CD4-positive, alpha-beta T cell (primary cell): ENCODE measurements at regions of chr5 and their contacts with region 1.

Region 1: GRCh38 chr5:178895651-178896571 is at the start of gene ZFP2:
- DNase-seq: peak in 11 of 14 experiments; percentile 2 to 60 (median 21)
- ATAC-seq: peak; percentile 73
- H3K4me3 ChIP-seq: peak within 1 kb of the TSS; percentile 61
- H3K4me3 Mint-ChIP-seq: peak within 1 kb of the TSS; percentile 90
- H3K27ac ChIP-seq: no peak within 1 kb of the TSS
- H3K27ac Mint-ChIP-seq: no peak within 1 kb of the TSS
- H3K4me1 ChIP-seq: peaks cover 9% of the 10 kb centered on the region
- H3K4me1 Mint-ChIP-seq: peaks cover 7% of the 10 kb centered on the region
- H3K27me3 ChIP-seq: no peaks in the 10 kb centered on the region
- H3K27me3 Mint-ChIP-seq: no peaks in the 10 kb centered on the region
- CTCF ChIP-seq: no peak
- total RNA-seq, gene ZFP2: 0.36 to 0.49 TPM

Region 2: GRCh38 chr5:177300236-177300880 is 1595.6 kb before region 1 on chr5:
- CTCF ChIA-PET with region 1: no interaction called
- POLR2A ChIA-PET with region 1: no interaction called
- intact Hi-C with region 1: no loop called
- DNase-seq: peak in 8 of 14 experiments; percentile 35 to 89 (median 50)
- ATAC-seq: peak; percentile 45
- H3K4me3 ChIP-seq: no peak overlapping the region
- H3K4me3 Mint-ChIP-seq: peak overlapping the region; percentile 79
- H3K27ac ChIP-seq: peak overlapping the region; percentile 49 to 55
- H3K27ac Mint-ChIP-seq: peak overlapping the region; percentile 88
- H3K4me1 ChIP-seq: peaks cover 72% of the 10 kb centered on the region
- H3K4me1 Mint-ChIP-seq: peaks cover 81% of the 10 kb centered on the region
- H3K27me3 ChIP-seq: no peaks in the 10 kb centered on the region
- H3K27me3 Mint-ChIP-seq: no peaks in the 10 kb centered on the region
- CTCF ChIP-seq: no peak

Region 3: DNA sequence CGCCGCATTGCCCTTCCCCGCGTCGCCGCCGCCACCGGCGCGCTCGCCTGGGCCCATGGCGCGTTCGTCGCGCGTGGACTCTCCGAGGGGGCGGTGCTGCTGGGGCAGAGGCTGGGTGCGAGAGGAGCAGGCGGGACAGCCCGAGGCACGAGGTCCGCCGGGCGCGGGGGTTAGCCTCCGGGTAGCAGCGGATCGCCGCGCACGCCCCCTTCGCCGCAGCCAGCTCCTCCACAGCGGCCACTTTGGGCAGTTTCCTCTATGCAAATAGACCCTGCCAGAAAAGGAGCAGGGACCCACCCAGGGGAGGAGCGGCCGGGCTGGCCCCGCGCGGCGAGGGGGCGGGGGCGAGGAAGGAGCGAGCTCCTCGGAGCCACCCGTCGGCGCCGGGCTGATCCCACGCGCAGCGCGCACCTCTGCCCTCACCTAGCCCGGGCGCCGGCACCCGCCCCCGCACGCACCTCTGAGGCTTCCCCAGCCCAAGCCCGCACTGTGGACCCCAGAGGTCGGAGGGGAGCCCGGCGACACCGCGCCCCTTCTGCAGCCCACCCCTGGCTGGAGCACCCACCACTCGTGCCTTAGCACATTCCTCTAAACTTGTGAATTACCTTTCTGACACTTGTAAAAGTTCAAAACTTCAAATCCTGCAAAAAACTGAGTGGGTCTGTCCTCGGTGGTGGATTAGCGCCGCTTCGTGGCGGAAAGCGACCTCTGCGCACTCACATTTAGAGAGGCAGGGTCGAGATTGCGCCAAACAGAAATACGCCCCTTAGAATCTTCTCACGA is 305.6 kb before region 1 on chr5 and contains the start of gene COL23A1:
- CTCF ChIA-PET with region 1: no interaction called
- POLR2A ChIA-PET with region 1: no interaction called
- intact Hi-C with region 1: no loop called
- DNase-seq: peak in 12 of 14 experiments; percentile 6 to 63 (median 34)
- ATAC-seq: peak; percentile 69
- H3K4me3 ChIP-seq: peak within 1 kb of the TSS; percentile 25
- H3K4me3 Mint-ChIP-seq: peak within 1 kb of the TSS; percentile 83
- H3K27ac ChIP-seq: no peak within 1 kb of the TSS
- H3K27ac Mint-ChIP-seq: no peak within 1 kb of the TSS
- H3K4me1 ChIP-seq: peaks cover 21% of the 10 kb centered on the region
- H3K4me1 Mint-ChIP-seq: peaks cover 10% of the 10 kb centered on the region
- H3K27me3 ChIP-seq: peaks cover 34 to 43% of the 10 kb centered on the region in 2 experiments
- H3K27me3 Mint-ChIP-seq: peaks cover 58% of the 10 kb centered on the region
- CTCF ChIP-seq: peak; percentile 32
- total RNA-seq, gene COL23A1: not detected

Region 4: DNA sequence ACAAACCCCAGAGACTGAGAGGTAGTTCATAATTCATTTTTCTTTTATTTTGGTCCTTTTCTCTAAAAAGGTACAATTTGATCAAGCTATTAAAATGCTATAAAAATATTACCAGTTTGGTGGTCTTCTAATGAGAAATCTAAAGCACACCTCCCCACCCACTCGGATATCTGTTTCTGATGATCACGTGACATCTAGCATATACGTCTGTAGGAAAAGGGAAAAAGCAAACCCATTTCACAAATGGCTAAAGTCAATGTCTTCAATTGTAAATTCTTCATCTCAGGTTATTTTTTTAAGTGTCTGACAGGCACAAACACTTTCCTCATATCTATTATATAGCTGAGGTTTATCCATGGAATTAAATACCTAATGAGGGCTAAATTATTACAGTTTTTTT is 184.3 kb before region 1 on chr5:
- CTCF ChIA-PET with region 1: no interaction called
- POLR2A ChIA-PET with region 1: no interaction called
- intact Hi-C with region 1: no loop called
- DNase-seq: no peak
- ATAC-seq: no peak
- H3K4me3 ChIP-seq: no peak overlapping the region
- H3K4me3 Mint-ChIP-seq: no peak overlapping the region
- H3K27ac ChIP-seq: no peak overlapping the region
- H3K27ac Mint-ChIP-seq: no peak overlapping the region
- H3K4me1 ChIP-seq: no peaks in the 10 kb centered on the region
- H3K4me1 Mint-ChIP-seq: no peaks in the 10 kb centered on the region
- H3K27me3 ChIP-seq: no peaks in the 10 kb centered on the region
- H3K27me3 Mint-ChIP-seq: no peaks in the 10 kb centered on the region
- CTCF ChIP-seq: no peak

Region 5: DNA sequence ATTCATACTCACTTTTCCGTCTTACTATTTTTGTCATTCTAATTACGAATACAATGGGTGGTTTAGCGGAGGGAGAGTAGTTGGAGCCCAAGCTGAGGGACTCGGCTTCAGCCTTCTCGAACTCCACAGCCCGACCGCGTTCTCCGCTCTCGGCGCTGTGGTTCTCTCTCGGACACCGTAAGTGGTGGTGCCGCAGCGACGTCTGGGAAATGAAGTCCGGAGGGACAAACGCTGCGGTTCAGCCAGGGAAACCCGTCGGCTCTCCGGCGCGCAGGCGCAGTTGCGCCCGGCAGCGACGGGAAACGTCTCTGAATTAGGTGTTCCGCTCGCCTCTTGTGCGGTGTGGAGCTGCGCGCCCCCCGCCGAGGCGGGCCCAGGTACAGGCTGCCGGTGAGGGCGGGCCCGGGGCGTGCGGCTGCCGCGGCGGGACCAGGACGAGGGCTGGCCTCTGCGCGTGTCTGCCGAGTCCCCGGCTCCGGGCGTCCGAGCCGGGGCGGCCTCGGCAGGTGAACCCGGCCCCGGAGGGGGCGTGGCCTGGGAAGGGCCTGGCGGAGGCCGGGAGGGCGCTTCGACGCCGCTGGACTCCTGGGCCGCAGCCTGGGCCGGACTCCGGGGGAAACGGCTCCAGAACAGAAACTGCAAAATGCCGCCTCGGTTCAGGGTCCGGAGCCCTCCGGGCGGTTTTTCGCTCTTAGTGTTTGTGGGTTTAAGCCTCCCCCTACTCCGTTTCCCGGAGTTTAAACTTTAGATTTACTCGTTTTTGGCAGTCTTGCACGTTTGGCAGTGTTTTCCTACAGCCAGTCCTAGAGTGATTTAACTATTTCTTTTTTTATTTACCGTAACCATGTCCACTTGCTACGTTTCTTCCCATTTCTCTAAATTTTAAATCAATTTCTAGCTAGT is 127.9 kb after region 1 on chr5 and contains the start of gene ZNF879:
- CTCF ChIA-PET with region 1: no interaction called
- POLR2A ChIA-PET with region 1: no interaction called
- intact Hi-C with region 1: loop called in 1 of 2 experiments (anchors 10 kb)
- DNase-seq: peak; percentile 90 to 97 (median 94)
- ATAC-seq: peak; percentile 94
- H3K4me3 ChIP-seq: peak within 1 kb of the TSS; percentile 64
- H3K4me3 Mint-ChIP-seq: peak within 1 kb of the TSS; percentile 95
- H3K27ac ChIP-seq: no peak within 1 kb of the TSS
- H3K27ac Mint-ChIP-seq: peak within 1 kb of the TSS; percentile 83
- H3K4me1 ChIP-seq: peaks cover 22% of the 10 kb centered on the region
- H3K4me1 Mint-ChIP-seq: peaks cover 16% of the 10 kb centered on the region
- H3K27me3 ChIP-seq: no peaks in the 10 kb centered on the region
- H3K27me3 Mint-ChIP-seq: peaks cover 4% of the 10 kb centered on the region
- CTCF ChIP-seq: no peak
- total RNA-seq, gene ZNF879: 4.9 to 5.1 TPM

Region 6: DNA sequence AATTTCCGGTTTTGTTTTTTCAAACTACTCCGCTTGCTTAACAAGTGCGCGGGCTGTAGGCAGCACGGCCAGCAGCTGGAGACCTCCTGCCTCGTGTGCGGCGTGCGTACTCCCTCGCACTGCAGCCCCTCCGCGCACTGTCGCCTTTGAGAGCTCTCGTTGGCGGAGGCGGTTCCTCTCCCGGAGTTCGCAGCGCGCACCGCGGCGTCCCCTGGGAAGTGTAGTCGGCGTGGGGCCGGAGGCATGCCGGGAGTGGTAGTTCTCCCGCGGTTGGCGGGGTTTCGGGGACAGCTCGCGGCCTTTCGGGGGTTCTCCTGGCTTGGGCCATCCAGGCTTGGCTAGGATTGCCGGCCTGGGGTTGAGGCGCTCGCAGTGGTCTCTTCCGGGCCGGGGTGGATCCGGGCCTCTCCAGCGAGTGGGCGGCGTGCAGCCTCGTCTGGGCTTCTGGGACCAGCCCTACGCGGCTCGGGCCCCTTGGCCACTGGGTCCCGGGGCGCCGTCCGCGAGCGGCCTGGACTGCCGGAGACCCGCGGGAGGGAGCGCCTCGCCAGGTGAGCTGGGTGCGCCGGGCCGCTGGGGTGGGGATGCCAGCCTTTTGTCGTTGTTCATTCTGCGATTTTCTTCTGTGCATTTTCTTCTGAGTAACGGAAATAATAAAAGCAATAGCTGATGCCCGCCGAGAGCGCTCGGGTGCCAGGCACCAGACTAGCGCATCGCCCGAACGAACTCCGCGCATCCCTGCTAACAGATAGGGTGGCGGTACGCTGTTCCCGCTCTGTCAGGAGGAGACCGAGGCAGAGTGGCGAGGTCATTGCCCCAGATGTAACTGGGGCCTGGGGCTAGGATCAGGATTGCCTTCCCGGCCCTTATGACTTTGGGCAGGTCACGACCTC is 164.5 kb after region 1 on chr5 and contains the start of gene ZNF354C:
- CTCF ChIA-PET with region 1: no interaction called
- POLR2A ChIA-PET with region 1: no interaction called
- intact Hi-C with region 1: loop called in 1 of 2 experiments (anchors 10 kb)
- DNase-seq: peak; percentile 73 to 91 (median 82)
- ATAC-seq: peak; percentile 97
- H3K4me3 ChIP-seq: peak within 1 kb of the TSS; percentile 75
- H3K4me3 Mint-ChIP-seq: peak within 1 kb of the TSS; percentile 96
- H3K27ac ChIP-seq: peak within 1 kb of the TSS; percentile 47 to 61
- H3K27ac Mint-ChIP-seq: peak within 1 kb of the TSS; percentile 95
- H3K4me1 ChIP-seq: peaks cover 15% of the 10 kb centered on the region
- H3K4me1 Mint-ChIP-seq: peaks cover 34% of the 10 kb centered on the region
- H3K27me3 ChIP-seq: no peaks in the 10 kb centered on the region
- H3K27me3 Mint-ChIP-seq: peaks cover 9% of the 10 kb centered on the region
- CTCF ChIP-seq: no peak
- total RNA-seq, gene ZNF354C: 2.5 to 2.9 TPM